HepG2 (cell line): ENCODE measurements at regions of chr1 and their contacts with region 1.

Region 1: DNA sequence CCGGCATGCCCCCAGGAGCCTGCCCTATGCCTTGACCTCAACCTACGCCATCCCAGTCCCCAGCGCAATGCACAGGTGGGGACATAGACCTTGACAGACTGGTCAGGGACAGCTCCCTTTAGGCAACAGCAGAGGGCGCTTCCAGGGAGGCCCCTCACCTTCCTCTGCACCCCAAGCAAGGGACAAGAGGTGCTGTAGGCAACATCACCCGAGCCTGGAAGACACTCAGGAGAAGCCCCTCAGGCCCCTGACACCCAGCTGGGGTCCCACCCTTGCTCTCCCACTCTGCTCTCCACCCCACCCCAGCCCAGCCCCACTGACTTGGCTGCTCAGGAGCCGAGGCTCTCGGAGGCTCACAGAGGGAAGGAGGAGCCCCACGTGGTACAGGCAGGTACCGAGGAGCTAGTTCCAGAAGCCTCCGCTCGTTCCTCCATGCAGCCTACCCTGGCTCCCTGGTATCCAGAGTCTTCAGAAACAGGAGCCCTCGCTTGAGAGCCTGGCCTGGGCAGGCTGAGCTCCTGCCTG is 2.4 kb upstream of the WNT3A start:
- DNase-seq: peak; percentile 33
- ATAC-seq: peak; percentile 88
- H3K4me3 ChIP-seq: no peak overlapping the region; a peak in 1 of 6 replicates
- H3K27ac ChIP-seq: no peak overlapping the region
- H3K4me1 ChIP-seq: no peaks in the 10 kb centered on the region
- H3K27me3 ChIP-seq: peaks cover 13 to 59% of the 10 kb centered on the region in 2 experiments
- CTCF ChIP-seq: peak; percentile 72
- EP300 ChIP-seq: no peak
- POLR2A ChIP-seq: no peak
- RAD21 ChIP-seq: no peak

Region 2: DNA sequence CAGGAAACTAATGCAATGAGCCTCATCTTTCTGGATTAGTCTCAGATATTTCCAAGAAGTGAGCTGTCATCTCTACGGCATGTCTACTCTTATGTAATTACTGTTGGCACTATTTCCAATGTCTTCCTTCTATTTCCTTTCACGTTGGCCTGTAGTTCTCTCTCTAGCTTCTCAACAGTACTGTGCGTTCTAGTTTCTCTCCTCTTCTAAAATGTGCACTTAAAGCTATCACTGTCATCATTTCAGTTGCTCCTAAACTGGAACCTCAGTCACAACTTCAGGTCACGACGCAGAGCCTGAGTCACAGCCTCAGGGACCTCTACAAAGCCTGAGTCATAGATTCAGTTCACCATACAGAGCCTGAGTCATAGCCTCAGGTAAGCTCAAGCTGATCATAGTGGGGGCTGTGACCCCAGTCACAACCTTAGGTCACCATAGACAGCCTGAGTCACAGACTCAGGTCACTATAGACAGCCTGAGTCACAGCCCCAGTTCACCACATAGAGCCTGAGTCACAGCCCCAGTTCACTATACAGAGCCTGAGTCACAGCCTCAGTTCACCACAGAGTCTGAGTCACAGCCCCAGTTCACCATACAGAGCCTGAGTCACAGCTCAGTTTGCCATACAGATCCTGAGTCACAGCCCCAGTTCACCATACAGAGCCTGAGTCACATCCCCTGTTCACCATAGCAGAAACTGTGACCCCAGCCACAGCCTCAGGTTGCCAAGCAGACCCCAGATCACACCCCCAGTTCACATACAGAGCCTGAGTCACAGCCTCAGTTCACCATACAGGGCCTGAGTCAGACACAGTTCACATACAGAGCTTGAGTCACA is 69.7 kb before region 1 on chr1:
- CTCF ChIA-PET with region 1: no interaction called
- POLR2A ChIA-PET with region 1: no interaction called
- in situ Hi-C with region 1: no loop called
- intact Hi-C with region 1: no loop called
- DNase-seq: peak; percentile 27
- ATAC-seq: peak; percentile 30; the same call in 1 of the 3 replicates
- H3K4me3 ChIP-seq: no peak overlapping the region
- H3K27ac ChIP-seq: no peak overlapping the region
- H3K4me1 ChIP-seq: no peaks in the 10 kb centered on the region
- H3K27me3 ChIP-seq: peaks cover 7 to 48% of the 10 kb centered on the region in 2 experiments; a peak in 4 of 5 replicates
- CTCF ChIP-seq: no peak
- EP300 ChIP-seq: no peak
- POLR2A ChIP-seq: no peak
- RAD21 ChIP-seq: no peak

Region 3: DNA sequence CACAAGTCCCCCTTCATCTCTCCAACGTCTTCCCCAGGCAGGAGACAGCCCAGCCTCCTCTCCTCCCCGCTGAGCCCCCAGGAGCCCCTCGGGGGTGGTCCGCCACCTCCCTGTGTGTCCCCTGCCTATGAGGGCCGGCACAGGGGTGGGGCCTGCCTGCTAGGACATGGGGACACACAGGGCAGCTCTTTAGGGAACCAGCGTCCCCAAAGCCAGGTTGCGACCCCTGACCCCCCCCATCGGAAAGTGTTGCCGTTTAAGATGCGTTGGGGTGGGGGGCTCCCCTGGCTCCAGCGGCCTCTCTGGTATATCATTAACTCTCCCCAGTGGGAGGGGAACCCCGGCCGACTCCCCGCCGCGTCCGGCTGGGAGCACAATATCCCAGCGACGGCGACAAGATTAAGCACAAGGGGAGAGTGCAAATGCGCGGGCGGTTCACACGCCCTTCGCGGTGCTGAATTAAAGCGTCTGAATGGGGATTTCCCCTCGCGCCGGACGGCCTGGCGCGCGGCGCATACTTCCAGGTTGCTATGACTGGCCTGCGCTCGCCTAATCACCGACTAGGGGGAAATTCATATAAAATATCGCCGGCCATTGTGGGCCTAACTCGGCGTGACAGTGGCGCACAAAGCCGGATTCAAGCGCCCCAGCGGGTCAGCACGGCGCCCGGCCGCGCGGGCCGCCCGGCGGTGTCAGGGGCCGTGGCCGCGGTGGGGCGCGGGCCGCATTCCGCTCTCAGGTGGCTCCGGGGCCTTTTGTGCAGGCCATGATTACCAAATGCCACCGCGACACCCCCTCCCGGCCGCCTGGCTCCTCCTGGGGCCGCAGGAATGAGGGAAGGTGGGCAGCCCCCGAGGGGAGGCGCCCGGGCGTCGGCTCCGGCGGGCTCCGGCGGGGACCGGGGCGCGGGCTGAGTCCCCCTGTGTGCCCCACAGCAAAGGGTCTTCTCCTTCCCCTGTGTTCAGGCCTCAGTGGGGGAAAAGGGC is 33.3 kb after region 1 on chr1:
- CTCF ChIA-PET with region 1: no interaction called
- POLR2A ChIA-PET with region 1: no interaction called
- in situ Hi-C with region 1: no loop called
- intact Hi-C with region 1: no loop called
- DNase-seq: no peak
- ATAC-seq: no peak; the same call in 1 of the 3 replicates
- H3K4me3 ChIP-seq: 0 out of 6 replicates have a peak overlapping the region, but pooled peaks of 1 of the 3 experiments have one; percentile 10
- H3K27ac ChIP-seq: no peak overlapping the region
- H3K4me1 ChIP-seq: no peaks in the 10 kb centered on the region
- H3K27me3 ChIP-seq: peaks cover 3 to 46% of the 10 kb centered on the region in 2 experiments; a peak in 4 of 5 replicates
- CTCF ChIP-seq: no peak
- EP300 ChIP-seq: no peak
- POLR2A ChIP-seq: no peak
- RAD21 ChIP-seq: no peak

Region 4: GRCh38 chr1:228073857-228074545 is 69.6 kb after region 1 on chr1:
- CTCF ChIA-PET with region 1: no interaction called
- POLR2A ChIA-PET with region 1: no interaction called
- in situ Hi-C with region 1: loop called (anchors 5 kb)
- intact Hi-C with region 1: loop called (anchors 1 kb)
- DNase-seq: no peak
- ATAC-seq: peak; percentile 59
- H3K4me3 ChIP-seq: no peak overlapping the region
- H3K27ac ChIP-seq: no peak overlapping the region
- H3K4me1 ChIP-seq: no peaks in the 10 kb centered on the region
- H3K27me3 ChIP-seq: peaks cover 9 to 23% of the 10 kb centered on the region in 2 experiments; a peak in 3 of 5 replicates
- CTCF ChIP-seq: peak; percentile 55
- EP300 ChIP-seq: no peak
- POLR2A ChIP-seq: no peak
- RAD21 ChIP-seq: 0 out of 2 replicates have a peak, but pooled peaks have one; percentile 23

Region 5: DNA sequence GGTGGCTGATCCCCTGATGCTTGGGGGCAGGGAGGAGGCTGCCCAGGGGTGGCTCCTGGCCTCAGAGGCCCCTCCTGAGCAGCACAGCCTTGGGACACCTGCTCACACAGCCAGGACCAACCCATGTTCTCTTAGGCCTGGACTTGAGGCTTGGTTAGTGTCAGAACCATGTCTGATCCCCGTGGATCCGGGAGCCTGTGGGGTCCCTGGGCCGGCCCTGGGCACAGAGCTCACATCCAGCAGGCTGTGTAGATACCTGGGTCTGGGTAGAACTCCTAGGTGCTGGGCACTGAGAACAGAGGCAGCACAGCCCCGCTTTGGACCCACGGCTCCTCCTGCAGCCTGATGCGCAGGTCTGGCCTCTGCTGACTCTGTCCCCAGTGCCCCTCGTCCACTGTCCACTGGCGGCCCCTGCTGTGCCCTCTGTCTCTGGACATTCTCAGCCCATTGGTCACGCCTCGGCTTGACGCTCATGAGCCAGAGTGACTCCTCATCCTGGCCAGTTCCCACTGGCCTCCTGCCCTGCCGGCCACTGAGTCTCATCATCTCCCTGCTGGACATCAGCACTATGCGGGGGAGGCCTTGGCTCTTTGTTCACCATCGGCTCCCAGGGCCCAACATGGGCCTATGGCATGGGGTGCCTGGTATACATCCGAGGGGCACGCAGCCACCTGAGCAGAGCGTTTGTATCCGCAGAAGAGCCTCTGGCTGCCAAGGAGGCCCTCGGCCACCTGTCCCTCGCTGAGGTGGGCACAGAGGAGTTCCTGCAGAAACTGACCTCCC is 332.1 kb after region 1 on chr1:
- CTCF ChIA-PET with region 1: no interaction called
- POLR2A ChIA-PET with region 1: no interaction called
- in situ Hi-C with region 1: no loop called
- intact Hi-C with region 1: no loop called
- DNase-seq: no peak
- ATAC-seq: no peak; the same call in 2 of the 3 replicates
- H3K4me3 ChIP-seq: no peak overlapping the region
- H3K27ac ChIP-seq: no peak overlapping the region
- H3K4me1 ChIP-seq: no peaks in the 10 kb centered on the region
- H3K27me3 ChIP-seq: peaks cover 6 to 7% of the 10 kb centered on the region in 2 experiments; a peak in 3 of 5 replicates
- CTCF ChIP-seq: peak; percentile 39; the same call in 1 of the 2 replicates
- EP300 ChIP-seq: no peak
- POLR2A ChIP-seq: no peak
- RAD21 ChIP-seq: no peak